Tibial artery (tissue), 4 donors: ENCODE measurements at regions of chr6 and their contacts with region 1.

Region 1: GRCh38 chr6:35737413-35738211 is 780 bp downstream of the ARMC12 start:
- DNase-seq: no peak
- H3K4me3 ChIP-seq: no peak overlapping the region
- H3K27ac ChIP-seq: peak overlapping the region in 1 of 2 donors; percentile 5
- H3K4me1 ChIP-seq: peaks cover 4 to 47% (median 30%) of the 10 kb centered on the region in 4 donors
- H3K27me3 ChIP-seq: no peaks in the 10 kb centered on the region
- CTCF ChIP-seq: peak; percentile 92 to 98

Region 2: GRCh38 chr6:35522660-35523658 is 214.7 kb before region 1 on chr6:
- intact Hi-C with region 1: loop called (anchors 1 kb)
- DNase-seq: peak; percentile 61 to 82
- H3K4me3 ChIP-seq: peak overlapping the region in 1 of 2 donors; percentile 40
- H3K27ac ChIP-seq: no peak overlapping the region
- H3K4me1 ChIP-seq: peaks cover 0 to 9% (median 2%) of the 10 kb centered on the region in 4 donors
- H3K27me3 ChIP-seq: peaks cover 0 to 6% of the 10 kb centered on the region in 2 donors
- CTCF ChIP-seq: peak; percentile 96 to 100